MCF 10A (cell line): ENCODE measurements at regions of chr2 and their contacts with region 1.

Region 1: GRCh38 chr2:47906157-47907038 is at the start of gene FBXO11:
- DNase-seq: peak; percentile 99
- H3K4me3 Mint-ChIP-seq: peak within 1 kb of the TSS; percentile 92
- H3K27ac Mint-ChIP-seq: peak within 1 kb of the TSS; percentile 97
- H3K4me1 Mint-ChIP-seq: peaks cover 18% of the 10 kb centered on the region
- H3K27me3 Mint-ChIP-seq: no peaks in the 10 kb centered on the region
- CTCF ChIP-seq: peak; percentile 38
- total RNA-seq, gene FBXO11: 60.4 and 64.1 TPM in 2 replicates

Region 2: GRCh38 chr2:47782671-47783485 is 123.5 kb before region 1 on chr2 and contains the start of gene MSH6:
- CTCF ChIA-PET with region 1: no interaction called
- POLR2A ChIA-PET with region 1: interaction called, 3 read pairs
- intact Hi-C with region 1: loop called (anchors 5 kb)
- DNase-seq: peak; percentile 86
- H3K4me3 Mint-ChIP-seq: peak within 1 kb of the TSS; percentile 92
- H3K27ac Mint-ChIP-seq: peak within 1 kb of the TSS; percentile 75
- H3K4me1 Mint-ChIP-seq: peaks cover 14% of the 10 kb centered on the region
- H3K27me3 Mint-ChIP-seq: no peaks in the 10 kb centered on the region
- CTCF ChIP-seq: no peak
- total RNA-seq, gene MSH6: 40.3 and 45.3 TPM in 2 replicates

Region 3: GRCh38 chr2:47867205-47867604 is 39.2 kb before region 1 on chr2:
- CTCF ChIA-PET with region 1: interaction called, 3 read pairs
- POLR2A ChIA-PET with region 1: interaction called, 5 read pairs
- intact Hi-C with region 1: loop called (anchors 5 kb)
- DNase-seq: peak; percentile 87
- H3K4me3 Mint-ChIP-seq: peak overlapping the region; percentile 4
- H3K27ac Mint-ChIP-seq: peak overlapping the region; percentile 34
- H3K4me1 Mint-ChIP-seq: peaks cover 22% of the 10 kb centered on the region
- H3K27me3 Mint-ChIP-seq: no peaks in the 10 kb centered on the region
- CTCF ChIP-seq: no peak

Region 4: GRCh38 chr2:47893771-47894170 is 12.6 kb before region 1 on chr2:
- CTCF ChIA-PET with region 1: interaction called, 4 read pairs
- POLR2A ChIA-PET with region 1: interaction called, 14 read pairs
- intact Hi-C with region 1: no loop called
- DNase-seq: no peak
- H3K4me3 Mint-ChIP-seq: no peak overlapping the region
- H3K27ac Mint-ChIP-seq: no peak overlapping the region
- H3K4me1 Mint-ChIP-seq: peaks cover 32% of the 10 kb centered on the region
- H3K27me3 Mint-ChIP-seq: no peaks in the 10 kb centered on the region
- CTCF ChIP-seq: no peak

Region 5: GRCh38 chr2:48265169-48266030 is 359.0 kb after region 1 on chr2:
- CTCF ChIA-PET with region 1: no interaction called
- POLR2A ChIA-PET with region 1: no interaction called
- intact Hi-C with region 1: no loop called
- DNase-seq: no peak
- H3K4me3 Mint-ChIP-seq: no peak overlapping the region
- H3K27ac Mint-ChIP-seq: no peak overlapping the region
- H3K4me1 Mint-ChIP-seq: no peaks in the 10 kb centered on the region
- H3K27me3 Mint-ChIP-seq: no peaks in the 10 kb centered on the region
- CTCF ChIP-seq: no peak